ENCODE measurements at regions of chr13 and their contacts with region 1.

Region 1: DNA sequence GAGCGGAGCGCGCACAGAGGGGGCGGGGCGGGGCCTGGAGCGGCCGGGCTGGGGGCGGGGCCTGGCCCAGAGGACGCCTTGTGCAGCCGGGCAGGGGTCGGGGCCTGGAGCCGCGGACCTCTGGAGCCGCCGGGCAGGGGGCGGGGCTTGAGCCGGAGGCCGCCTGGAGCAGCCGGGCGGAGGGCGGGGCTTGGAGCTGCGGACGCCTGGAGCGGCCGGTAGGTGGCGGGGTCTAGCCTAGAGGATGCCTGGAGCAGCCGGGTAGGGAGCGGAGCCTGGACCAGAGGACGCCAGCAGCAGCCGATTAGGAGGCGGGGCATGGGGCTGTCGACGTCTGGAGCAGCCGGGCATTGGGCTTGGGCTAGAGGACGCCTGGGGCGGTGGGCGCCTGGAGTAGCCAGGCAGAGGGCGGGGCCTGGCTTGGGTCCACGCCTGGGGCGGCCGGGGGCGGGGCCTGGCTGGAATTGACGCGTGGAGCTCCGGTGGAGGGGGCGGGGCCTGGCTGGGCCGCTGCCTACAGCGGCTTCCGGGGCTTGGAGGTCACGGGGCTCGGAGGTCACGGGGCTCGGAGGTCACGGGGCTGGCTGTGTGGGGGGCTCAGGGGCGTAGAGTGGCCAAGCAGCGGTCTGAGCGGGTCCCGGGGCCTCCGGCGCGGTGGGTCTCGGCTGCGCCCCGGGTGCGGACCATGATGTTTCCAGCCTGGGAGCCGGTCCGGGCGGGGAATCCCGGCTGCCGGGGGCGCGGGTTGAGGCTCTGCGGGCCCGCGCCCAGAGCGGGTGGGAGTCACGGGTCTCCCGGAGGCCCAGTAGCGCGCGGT is at the start of gene ANKRD10:
- DNase-seq: peak; percentile 95 to 99 (median 98)

Region 2: DNA sequence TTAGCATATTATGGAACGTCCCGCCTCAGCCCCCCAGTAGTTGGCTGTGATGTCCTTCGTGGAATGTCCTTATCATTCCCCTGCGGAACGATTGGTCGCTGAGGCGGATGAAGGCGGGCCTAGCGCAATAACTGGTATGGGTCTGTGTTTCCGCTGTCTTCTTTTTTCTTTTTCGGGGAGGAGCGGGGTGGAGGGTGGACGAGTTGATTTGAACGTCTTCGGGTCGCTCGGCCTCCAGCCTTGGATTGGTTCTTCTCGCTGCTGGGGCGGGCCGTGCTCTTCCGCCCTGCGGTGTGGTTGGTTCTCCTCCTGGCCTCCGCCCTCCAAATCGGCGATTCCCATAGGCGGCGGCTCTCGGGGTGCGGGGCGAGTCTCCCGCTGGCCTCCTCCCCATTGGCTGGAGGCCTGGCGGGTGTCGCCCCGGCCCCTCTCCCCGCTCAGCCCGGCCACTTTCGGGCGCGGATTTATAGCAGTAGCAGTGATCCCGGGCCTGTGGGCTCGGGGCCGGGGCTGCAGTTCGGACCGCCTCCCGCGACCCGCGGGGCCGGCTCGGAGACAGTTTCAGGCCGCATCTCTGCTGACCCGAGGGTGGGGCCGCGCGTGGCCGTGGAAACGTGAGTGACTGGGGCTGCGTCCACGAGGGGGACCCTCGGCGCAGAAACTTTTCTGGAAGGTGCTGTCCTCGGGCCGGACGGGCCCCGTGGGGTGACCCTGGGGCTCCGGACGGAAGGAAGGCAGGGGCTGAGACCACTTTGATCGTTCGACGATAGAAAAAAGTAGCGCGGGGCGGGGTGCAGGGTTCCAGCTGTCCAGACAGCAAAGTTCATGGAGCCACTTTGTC is 199.7 kb before region 1 on chr13:
- intact Hi-C with region 1: loop called (anchors 5 kb)
- DNase-seq: peak; percentile 91 to 100 (median 99)

Region 3: GRCh38 chr13:111153279-111153976 is 238.2 kb after region 1 on chr13:
- intact Hi-C with region 1: loop called (anchors 10 kb)
- DNase-seq: peak; percentile 85 to 98 (median 96)

Region 4: DNA sequence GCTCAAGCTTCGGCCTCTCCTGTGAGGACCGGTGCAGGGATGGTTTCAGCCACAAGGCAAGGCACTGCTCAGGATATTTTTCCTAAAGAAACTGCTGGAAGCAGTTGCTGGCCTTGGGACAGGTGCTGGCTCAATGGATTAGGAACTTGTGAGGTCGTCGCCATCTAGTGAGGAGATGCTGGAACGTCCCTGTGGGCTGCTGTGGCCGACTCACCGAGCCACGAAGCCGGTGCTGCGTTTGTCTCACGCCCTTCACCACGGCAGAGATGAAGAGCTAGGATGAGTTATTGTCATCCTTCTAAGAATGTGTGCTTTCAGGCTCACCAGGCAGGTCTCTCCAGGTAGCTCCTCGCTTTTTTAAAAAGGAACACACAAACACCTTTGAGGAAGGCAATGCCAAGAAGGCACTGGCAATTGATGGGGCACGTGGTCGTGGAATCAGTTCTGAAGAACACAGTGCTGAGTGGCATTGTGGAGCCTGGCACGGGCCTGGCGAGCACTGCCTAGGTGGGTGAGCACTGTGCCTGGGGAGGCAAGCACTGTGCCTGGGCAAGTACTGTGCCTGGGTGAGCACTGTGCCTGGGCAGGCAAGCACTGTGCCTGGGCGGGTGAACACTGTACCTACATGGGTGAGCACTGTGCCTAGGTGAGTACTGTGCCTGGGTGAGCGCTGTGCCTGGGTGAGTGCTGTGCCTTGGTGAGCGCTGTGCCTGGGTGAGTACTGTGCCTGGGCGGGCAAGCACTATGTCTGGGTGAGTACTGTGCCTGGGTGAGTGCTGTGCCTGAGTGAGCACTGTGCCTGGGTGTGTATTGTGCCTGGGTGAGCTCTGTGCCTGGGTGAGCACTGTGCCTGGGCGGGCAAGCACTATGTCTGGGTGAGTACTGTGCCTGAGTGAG is 545.5 kb after region 1 on chr13:
- intact Hi-C with region 1: loop called (anchors 10 kb)
- DNase-seq: peak; percentile 49 to 89 (median 72)